IMR-90 (cell line): ENCODE measurements at regions of chr14 and their contacts with region 1.

Region 1: GRCh38 chr14:68685419-68686204 is 107.3 kb downstream of the ZFP36L1 start:
- DNase-seq: peak; percentile 84
- ATAC-seq: peak; percentile 25; the same call in 1 of the 2 replicates
- H3K4me3 ChIP-seq: no peak overlapping the region
- H3K27ac ChIP-seq: peak overlapping the region; percentile 77
- H3K4me1 ChIP-seq: peaks cover 47% of the 10 kb centered on the region
- H3K27me3 ChIP-seq: no peaks in the 10 kb centered on the region
- CTCF ChIP-seq: no peak
- POLR2A ChIP-seq: no peak
- RAD21 ChIP-seq: no peak

Region 2: GRCh38 chr14:68254669-68255527 is 430.7 kb before region 1 on chr14:
- CTCF ChIA-PET with region 1: no interaction called
- POLR2A ChIA-PET with region 1: interaction called, 10 read pairs
- dilution Hi-C with region 1: no loop called
- in situ Hi-C with region 1: no loop called
- intact Hi-C with region 1: no loop called
- DNase-seq: peak; percentile 46
- ATAC-seq: peak; percentile 51
- H3K4me3 ChIP-seq: no peak overlapping the region
- H3K27ac ChIP-seq: peak overlapping the region; percentile 1; the same call in 1 of the 2 replicates
- H3K4me1 ChIP-seq: peaks cover 10% of the 10 kb centered on the region
- H3K27me3 ChIP-seq: no peaks in the 10 kb centered on the region
- CTCF ChIP-seq: no peak
- POLR2A ChIP-seq: no peak
- RAD21 ChIP-seq: no peak

Region 3: DNA sequence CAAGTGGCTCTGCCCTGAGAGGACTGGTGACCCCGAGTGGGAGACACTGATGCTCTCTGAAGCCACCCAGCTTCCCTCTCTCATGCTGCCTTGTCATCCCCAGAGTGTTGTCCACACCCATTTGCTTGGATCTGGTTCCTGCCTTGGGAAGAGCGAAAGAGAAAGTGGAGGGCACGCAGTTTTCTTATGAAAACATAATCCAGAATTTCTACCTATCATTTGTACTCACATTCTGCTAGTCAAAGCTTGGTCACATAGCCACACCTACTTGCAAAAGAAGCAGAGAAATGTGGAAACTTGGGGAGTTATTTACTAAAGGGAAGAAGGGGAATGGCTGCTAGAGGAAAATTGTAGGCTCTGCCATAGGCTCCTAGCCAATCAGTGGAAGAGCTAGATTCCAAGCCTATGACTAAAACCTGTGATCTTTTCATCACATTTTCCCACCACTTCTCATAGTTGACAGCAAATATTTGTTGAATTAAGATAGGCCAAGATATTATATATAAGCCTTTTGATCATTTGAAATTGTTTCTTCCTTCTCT is 219.1 kb before region 1 on chr14:
- CTCF ChIA-PET with region 1: no interaction called
- POLR2A ChIA-PET with region 1: no interaction called
- dilution Hi-C with region 1: no loop called
- in situ Hi-C with region 1: no loop called
- intact Hi-C with region 1: loop called (anchors 10 kb)
- DNase-seq: peak; percentile 92
- ATAC-seq: peak; percentile 89
- H3K4me3 ChIP-seq: no peak overlapping the region
- H3K27ac ChIP-seq: peak overlapping the region; percentile 76
- H3K4me1 ChIP-seq: peaks cover 8% of the 10 kb centered on the region
- H3K27me3 ChIP-seq: no peaks in the 10 kb centered on the region
- CTCF ChIP-seq: no peak
- POLR2A ChIP-seq: no peak
- RAD21 ChIP-seq: no peak

Region 4: DNA sequence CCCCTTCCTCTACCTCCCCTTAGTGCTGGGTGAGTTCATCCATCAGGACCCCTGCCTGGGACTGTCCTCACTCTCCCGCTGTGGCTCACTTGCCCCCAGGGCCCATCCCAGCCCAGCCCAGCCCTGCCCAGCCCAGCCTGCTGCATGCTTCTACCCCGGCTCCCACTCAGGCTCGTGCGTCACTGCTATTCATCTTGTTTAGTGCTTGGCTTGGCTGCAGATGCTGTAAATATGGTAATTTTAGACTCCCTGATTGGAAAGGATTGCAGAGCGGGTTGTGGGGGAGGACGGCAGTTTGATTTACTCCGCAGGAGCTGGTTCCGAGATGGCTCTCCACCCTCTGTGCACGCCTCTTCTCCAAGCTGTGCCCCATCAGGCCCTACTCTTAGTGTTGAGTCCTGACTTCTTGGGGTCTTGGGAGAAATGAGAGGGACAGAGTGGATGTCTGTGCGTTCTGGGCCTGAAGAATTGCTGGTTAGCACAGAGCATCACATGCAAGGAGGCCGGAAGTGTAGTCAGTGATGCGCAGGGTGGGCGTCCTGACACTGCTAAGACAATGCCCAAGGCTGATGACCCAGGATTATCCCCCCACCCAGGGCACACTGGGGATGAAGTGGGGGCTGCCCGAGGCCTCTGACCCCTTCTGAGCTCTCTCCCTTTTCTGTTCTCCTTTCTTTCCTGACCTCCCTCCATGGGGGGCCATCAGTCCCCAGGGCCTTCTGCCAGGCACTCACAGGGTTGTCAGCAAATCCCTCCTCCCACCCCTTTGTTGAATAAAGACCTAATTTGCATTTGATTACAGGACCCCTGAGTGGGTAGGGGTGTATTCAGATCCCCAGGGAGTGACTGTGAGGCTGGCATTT is 137.2 kb before region 1 on chr14:
- CTCF ChIA-PET with region 1: no interaction called
- POLR2A ChIA-PET with region 1: interaction called, 5 read pairs
- dilution Hi-C with region 1: no loop called
- in situ Hi-C with region 1: no loop called
- intact Hi-C with region 1: loop called (anchors 10 kb)
- DNase-seq: peak; percentile 98
- ATAC-seq: peak; percentile 79
- H3K4me3 ChIP-seq: no peak overlapping the region
- H3K27ac ChIP-seq: peak overlapping the region; percentile 95
- H3K4me1 ChIP-seq: peaks cover 45% of the 10 kb centered on the region
- H3K27me3 ChIP-seq: no peaks in the 10 kb centered on the region
- CTCF ChIP-seq: no peak
- POLR2A ChIP-seq: 0 out of 2 replicates have a peak, but pooled peaks have one; percentile 30
- RAD21 ChIP-seq: peak; percentile 31

Region 5: DNA sequence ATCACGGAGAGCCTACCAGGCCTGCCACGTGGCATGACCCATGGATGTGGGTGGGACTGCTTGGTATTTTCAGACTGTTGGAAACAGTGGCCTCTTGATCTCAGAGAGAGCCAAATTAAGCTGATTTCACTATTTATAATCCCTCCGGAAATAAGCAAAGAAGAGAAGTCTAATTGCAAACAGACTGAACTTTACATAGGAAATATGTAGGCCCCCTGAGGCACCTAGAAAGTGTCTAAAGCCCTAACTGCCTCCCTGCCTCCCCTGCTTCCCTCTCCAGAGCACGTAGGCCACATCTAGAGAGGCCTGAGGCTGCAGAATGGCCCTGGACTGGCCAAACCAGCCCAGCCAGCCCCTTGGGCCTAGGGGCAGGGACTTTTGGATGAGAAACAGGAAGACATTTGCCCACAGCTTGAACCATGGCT is 16.5 kb before region 1 on chr14:
- CTCF ChIA-PET with region 1: interaction called, 3 read pairs
- POLR2A ChIA-PET with region 1: interaction called, 17 read pairs
- dilution Hi-C with region 1: no loop called
- in situ Hi-C with region 1: no loop called
- intact Hi-C with region 1: no loop called
- DNase-seq: no peak
- ATAC-seq: no peak
- H3K4me3 ChIP-seq: no peak overlapping the region
- H3K27ac ChIP-seq: no peak overlapping the region
- H3K4me1 ChIP-seq: peaks cover 32% of the 10 kb centered on the region
- H3K27me3 ChIP-seq: no peaks in the 10 kb centered on the region
- CTCF ChIP-seq: no peak
- POLR2A ChIP-seq: no peak
- RAD21 ChIP-seq: no peak

Region 6: DNA sequence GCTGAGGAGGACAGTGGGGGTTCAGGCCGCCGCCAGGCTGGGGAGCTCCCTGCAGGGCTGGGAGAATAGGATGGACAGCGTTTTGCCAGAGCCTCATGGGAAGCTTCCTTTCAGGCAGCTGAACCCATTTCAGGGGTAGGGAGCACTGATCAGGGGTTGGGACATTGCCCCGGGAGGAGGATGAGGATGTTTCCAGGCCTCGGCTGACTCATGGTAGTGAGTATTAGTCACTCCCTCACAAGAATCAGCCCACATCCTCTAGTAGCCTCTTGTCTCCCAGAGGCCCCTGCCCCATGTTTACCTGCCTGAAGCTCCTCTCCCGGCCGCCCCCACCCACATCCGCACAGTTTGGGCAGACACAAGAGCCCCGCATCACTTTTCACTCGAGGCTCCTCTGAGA is 17.5 kb after region 1 on chr14:
- CTCF ChIA-PET with region 1: no interaction called
- POLR2A ChIA-PET with region 1: interaction called, 12 read pairs
- dilution Hi-C with region 1: no loop called
- in situ Hi-C with region 1: no loop called
- intact Hi-C with region 1: no loop called
- DNase-seq: peak; percentile 81
- ATAC-seq: peak; percentile 91
- H3K4me3 ChIP-seq: no peak overlapping the region
- H3K27ac ChIP-seq: no peak overlapping the region
- H3K4me1 ChIP-seq: peaks cover 12% of the 10 kb centered on the region
- H3K27me3 ChIP-seq: no peaks in the 10 kb centered on the region
- CTCF ChIP-seq: no peak
- POLR2A ChIP-seq: no peak
- RAD21 ChIP-seq: no peak

Region 7: DNA sequence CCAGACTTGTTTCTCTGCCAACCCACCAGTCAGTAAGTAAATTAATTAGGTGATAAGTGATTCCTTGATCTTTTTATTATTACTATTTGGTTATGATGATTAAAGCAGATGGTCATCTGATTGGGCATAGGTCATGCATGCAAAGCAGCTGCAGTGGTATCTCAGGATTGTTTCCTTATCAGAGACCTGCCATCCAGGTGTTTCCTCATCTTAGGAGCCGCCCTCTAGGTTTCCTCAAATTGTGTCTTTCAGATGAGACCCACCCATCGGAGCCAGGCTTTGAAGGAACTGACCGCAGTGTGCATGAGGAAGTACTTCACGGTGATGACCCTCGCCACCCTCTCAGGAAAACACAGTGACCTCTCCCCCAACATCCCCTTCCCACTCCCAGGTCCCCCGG is 43.9 kb after region 1 on chr14:
- CTCF ChIA-PET with region 1: no interaction called
- POLR2A ChIA-PET with region 1: interaction called, 12 read pairs
- dilution Hi-C with region 1: no loop called
- in situ Hi-C with region 1: no loop called
- intact Hi-C with region 1: no loop called
- DNase-seq: no peak
- ATAC-seq: no peak
- H3K4me3 ChIP-seq: no peak overlapping the region
- H3K27ac ChIP-seq: no peak overlapping the region
- H3K4me1 ChIP-seq: no peaks in the 10 kb centered on the region
- H3K27me3 ChIP-seq: peaks cover 2% of the 10 kb centered on the region; the same call in 1 of the 2 replicates
- CTCF ChIP-seq: no peak
- POLR2A ChIP-seq: no peak
- RAD21 ChIP-seq: no peak